ENCODE measurements at regions of chr22 and their contacts with region 1.

Region 1: DNA sequence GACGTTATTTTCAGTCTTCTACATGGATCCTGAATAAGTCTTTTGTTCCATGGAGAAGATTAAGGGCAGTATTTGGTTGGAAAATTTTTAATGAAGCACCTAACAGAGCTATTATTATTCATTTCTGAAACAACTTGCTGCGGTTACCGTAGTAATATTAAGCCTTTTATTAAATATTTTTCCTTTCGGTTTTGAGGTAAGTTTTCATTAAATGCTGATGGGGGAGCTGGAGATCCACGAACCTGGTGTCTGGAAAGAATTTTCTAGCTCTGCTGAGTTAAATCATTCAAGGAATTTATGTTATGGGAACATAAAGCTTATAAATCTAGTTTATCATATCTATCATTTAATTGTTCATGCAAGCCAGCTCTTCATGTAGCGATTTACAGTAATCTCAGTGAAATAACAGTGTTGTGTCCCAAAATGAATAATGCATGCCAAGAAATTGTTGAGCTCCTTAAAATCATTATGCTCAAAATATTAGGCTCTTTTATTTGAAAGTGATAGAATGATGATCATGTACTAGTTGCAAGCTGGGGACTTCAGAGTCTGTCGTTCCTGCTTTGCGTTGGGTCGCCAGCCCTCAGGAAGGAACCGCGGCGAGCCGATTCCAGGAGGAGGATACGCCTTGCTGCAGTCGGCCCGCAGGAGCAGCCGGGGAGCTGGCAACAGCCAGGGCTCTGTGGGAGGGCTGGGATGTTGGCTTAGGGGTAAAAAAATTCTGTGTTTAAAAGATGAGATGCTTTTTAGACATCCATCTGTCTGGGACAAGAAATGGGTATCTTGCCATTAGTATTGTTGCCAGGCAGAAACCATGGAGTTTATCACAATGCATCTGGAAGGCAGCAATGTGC is 83.1 kb downstream of the TBC1D22A start:
- DNase-seq: no peak
- H3K4me3 Mint-ChIP-seq: no peak overlapping the region
- H3K27ac Mint-ChIP-seq: no peak overlapping the region
- H3K4me1 Mint-ChIP-seq: peaks cover 53% of the 10 kb centered on the region
- H3K27me3 Mint-ChIP-seq: no peaks in the 10 kb centered on the region
- CTCF ChIP-seq: peak; percentile 14

Region 2: DNA sequence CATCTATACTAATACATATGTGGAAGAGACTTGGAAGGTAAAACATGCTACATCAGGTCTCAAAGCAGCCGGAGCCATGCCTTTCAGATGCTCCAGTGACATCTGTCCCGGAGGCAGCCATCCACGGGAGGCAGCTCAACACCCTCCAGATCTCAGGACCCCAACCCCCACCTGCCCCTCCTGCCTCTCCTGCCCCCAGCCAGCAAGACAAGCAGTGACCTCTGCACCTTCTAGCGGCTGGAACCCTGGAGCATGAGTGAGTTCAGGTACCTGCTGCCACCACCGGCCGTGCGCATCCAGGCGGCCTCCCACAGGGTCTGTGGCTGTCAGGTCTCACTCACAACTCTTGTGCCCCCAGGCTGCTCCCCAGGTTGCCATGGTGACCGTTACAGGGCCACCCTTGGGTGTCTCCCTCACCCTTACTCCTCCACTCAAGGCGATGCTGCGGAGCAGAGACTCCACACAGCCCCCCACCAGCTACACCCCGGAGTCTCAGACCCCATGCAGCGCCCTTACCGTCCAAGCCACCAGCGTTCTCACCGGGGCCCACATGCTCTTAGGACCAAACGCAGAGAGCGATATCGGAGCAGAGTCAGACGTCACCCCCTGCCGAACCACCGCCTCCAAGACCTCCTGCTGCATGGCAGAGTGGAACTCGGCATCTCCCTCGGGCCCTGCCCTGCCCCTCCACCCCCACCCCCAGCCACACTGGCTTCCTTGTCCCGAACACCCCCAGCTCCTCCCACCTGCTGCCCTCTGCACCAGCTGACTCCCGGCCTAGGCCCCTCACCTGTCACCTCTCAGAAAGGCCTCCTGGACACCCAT is 142.1 kb before region 1 on chr22:
- CTCF ChIA-PET with region 1: no interaction called
- POLR2A ChIA-PET with region 1: no interaction called
- intact Hi-C with region 1: no loop called
- DNase-seq: no peak
- H3K4me3 Mint-ChIP-seq: no peak overlapping the region
- H3K27ac Mint-ChIP-seq: no peak overlapping the region
- H3K4me1 Mint-ChIP-seq: no peaks in the 10 kb centered on the region
- H3K27me3 Mint-ChIP-seq: no peaks in the 10 kb centered on the region
- CTCF ChIP-seq: no peak

Region 3: GRCh38 chr22:46829941-46830715 is 15.4 kb before region 1 on chr22:
- CTCF ChIA-PET with region 1: interaction called, 31 read pairs
- POLR2A ChIA-PET with region 1: interaction called, 13 read pairs
- intact Hi-C with region 1: no loop called
- DNase-seq: peak; percentile 55
- H3K4me3 Mint-ChIP-seq: peak overlapping the region; percentile 59
- H3K27ac Mint-ChIP-seq: peak overlapping the region; percentile 95
- H3K4me1 Mint-ChIP-seq: peaks cover 41% of the 10 kb centered on the region
- H3K27me3 Mint-ChIP-seq: no peaks in the 10 kb centered on the region
- CTCF ChIP-seq: no peak

Region 4: GRCh38 chr22:46866591-46866990 is 21.1 kb after region 1 on chr22:
- CTCF ChIA-PET with region 1: interaction called, 5 read pairs
- POLR2A ChIA-PET with region 1: interaction called, 10 read pairs
- intact Hi-C with region 1: no loop called
- DNase-seq: peak; percentile 57
- H3K4me3 Mint-ChIP-seq: no peak overlapping the region
- H3K27ac Mint-ChIP-seq: peak overlapping the region; percentile 80
- H3K4me1 Mint-ChIP-seq: peaks cover 11% of the 10 kb centered on the region
- H3K27me3 Mint-ChIP-seq: no peaks in the 10 kb centered on the region
- CTCF ChIP-seq: no peak

Measured in MCF 10A (cell line).